Left ventricle myocardium inferior (tissue), 1 donor: ENCODE measurements at regions of chr18 and their contacts with region 1.

Region 1: DNA sequence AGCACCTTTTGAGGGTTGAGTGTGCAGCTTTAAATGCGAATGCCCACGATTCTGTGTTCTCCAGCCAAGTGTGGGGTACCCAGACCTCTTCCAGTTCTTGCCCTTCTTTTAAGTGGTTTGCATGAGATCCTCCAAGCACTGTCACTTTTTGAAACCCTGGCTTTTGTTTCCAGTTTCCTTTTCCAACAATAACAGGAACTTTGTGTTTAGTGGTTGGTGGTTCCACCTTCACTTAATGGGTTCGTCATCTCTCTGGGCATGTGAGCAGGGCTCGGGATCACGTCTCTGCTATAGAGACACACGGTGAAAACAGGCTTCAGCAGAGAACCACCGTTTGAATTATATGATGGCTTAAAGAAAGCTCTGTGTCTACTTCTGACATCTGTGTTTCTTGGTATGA is 197.6 kb downstream of the LDLRAD4 start:
- DNase-seq: no peak
- H3K4me3 ChIP-seq: peak overlapping the region; percentile 2
- H3K27ac ChIP-seq: peak overlapping the region; percentile 75
- H3K4me1 ChIP-seq: peaks cover 77% of the 10 kb centered on the region
- H3K27me3 ChIP-seq: no peaks in the 10 kb centered on the region
- CTCF ChIP-seq: no peak

Region 2: DNA sequence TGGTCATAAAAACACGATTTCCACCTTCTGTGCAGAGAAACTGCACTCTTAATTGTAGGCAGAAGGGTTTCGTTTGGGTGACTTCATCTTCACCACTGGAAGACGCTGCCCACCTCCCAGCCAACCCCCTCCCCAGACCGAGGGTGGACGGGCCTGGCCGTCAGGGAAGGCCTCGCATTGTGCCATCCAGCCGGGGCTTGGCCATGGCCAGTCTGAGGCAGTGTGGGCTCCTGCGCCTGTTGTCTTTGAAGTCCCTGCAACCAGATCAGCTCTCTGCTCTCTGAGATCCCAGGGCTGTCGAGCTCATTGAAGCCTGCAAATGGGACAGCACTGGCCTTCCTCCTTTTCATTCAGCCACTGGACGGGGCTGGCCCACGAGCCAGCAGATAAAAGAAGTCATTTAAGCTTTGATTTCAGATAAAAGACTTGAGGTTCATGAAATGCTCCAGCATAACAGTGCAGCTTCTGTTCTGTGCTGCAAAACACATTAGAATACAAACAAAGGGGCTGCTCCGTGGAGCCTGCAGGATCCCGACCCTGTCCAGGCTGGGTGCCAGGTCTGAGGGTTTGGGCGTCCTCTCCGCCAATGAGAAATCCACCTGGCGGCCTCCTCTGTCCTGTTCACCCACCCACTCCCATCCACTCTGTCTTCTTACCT is 55.9 kb after region 1 on chr18:
- intact Hi-C with region 1: loop called (anchors 10 kb)
- DNase-seq: no peak
- H3K4me3 ChIP-seq: no peak overlapping the region
- H3K27ac ChIP-seq: peak overlapping the region; percentile 82
- H3K4me1 ChIP-seq: peaks cover 34% of the 10 kb centered on the region
- H3K27me3 ChIP-seq: no peaks in the 10 kb centered on the region
- CTCF ChIP-seq: no peak